Caco-2 (cell line): ENCODE measurements at regions of chr3 and their contacts with region 1.

Region 1: DNA sequence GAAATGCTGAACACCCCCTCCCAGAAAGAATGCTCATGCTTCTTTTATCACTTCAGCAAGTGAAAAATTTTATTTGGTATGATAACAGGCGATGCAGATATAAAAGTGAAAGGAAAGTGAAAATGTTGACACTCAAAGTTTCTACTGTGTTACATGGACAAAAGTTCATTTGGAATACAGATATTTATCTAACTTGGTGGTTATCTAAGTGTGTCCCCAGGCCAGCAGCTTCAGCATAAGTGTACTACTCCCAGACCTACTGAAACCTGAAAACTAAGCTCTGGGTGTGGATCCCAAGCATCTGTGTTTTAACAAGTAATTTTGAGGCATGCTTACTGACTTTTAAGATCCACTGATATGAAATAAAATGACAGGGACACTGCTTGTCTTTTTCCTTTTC is 157.1 kb upstream of the BCHE start:
- DNase-seq: no peak
- H3K4me3 ChIP-seq: no peak overlapping the region
- H3K4me3 Mint-ChIP-seq: no peak overlapping the region
- H3K27ac Mint-ChIP-seq: no peak overlapping the region
- H3K4me1 ChIP-seq: no peaks in the 10 kb centered on the region
- H3K4me1 Mint-ChIP-seq: no peaks in the 10 kb centered on the region
- H3K27me3 ChIP-seq: no peaks in the 10 kb centered on the region
- H3K27me3 Mint-ChIP-seq: no peaks in the 10 kb centered on the region
- CTCF ChIP-seq: no peak

Region 2: GRCh38 chr3:165464736-165465135 is 529.6 kb before region 1 on chr3:
- CTCF ChIA-PET with region 1: no interaction called
- POLR2A ChIA-PET with region 1: no interaction called
- intact Hi-C with region 1: no loop called
- DNase-seq: no peak
- H3K4me3 ChIP-seq: no peak overlapping the region
- H3K4me3 Mint-ChIP-seq: no peak overlapping the region
- H3K27ac Mint-ChIP-seq: no peak overlapping the region
- H3K4me1 ChIP-seq: no peaks in the 10 kb centered on the region
- H3K4me1 Mint-ChIP-seq: no peaks in the 10 kb centered on the region
- H3K27me3 ChIP-seq: no peaks in the 10 kb centered on the region
- H3K27me3 Mint-ChIP-seq: no peaks in the 10 kb centered on the region
- CTCF ChIP-seq: no peak

Region 3: GRCh38 chr3:165544432-165544831 is 449.9 kb before region 1 on chr3:
- CTCF ChIA-PET with region 1: no interaction called
- POLR2A ChIA-PET with region 1: no interaction called
- intact Hi-C with region 1: loop called (anchors 5 kb)
- DNase-seq: no peak
- H3K4me3 ChIP-seq: no peak overlapping the region
- H3K4me3 Mint-ChIP-seq: no peak overlapping the region
- H3K27ac Mint-ChIP-seq: no peak overlapping the region
- H3K4me1 ChIP-seq: no peaks in the 10 kb centered on the region
- H3K4me1 Mint-ChIP-seq: no peaks in the 10 kb centered on the region
- H3K27me3 ChIP-seq: no peaks in the 10 kb centered on the region
- H3K27me3 Mint-ChIP-seq: no peaks in the 10 kb centered on the region
- CTCF ChIP-seq: no peak

Region 4: DNA sequence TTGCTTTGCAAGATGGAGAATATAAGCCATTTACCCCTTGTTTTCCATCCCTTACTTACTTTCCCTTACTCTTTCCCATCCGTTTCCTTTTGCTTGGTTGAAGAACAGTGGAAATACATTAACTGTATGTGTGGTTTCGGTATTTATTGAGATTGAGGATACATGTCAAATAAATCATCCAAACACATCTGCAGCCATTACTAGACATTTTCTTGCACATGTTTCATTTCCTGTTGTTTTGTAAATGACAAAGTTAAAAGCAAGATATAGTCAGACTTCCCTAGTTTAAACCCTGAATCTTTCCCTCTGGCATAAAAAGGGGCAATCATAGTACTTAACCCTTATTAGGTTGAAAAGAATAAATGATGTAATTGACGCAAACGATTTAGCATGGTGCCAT is 75.0 kb before region 1 on chr3:
- CTCF ChIA-PET with region 1: no interaction called
- POLR2A ChIA-PET with region 1: no interaction called
- intact Hi-C with region 1: no loop called
- DNase-seq: no peak
- H3K4me3 ChIP-seq: no peak overlapping the region
- H3K4me3 Mint-ChIP-seq: no peak overlapping the region
- H3K27ac Mint-ChIP-seq: no peak overlapping the region
- H3K4me1 ChIP-seq: no peaks in the 10 kb centered on the region
- H3K4me1 Mint-ChIP-seq: no peaks in the 10 kb centered on the region
- H3K27me3 ChIP-seq: no peaks in the 10 kb centered on the region
- H3K27me3 Mint-ChIP-seq: no peaks in the 10 kb centered on the region
- CTCF ChIP-seq: no peak